ENCODE measurements at regions of chr1 and their contacts with region 1.

Region 1: DNA sequence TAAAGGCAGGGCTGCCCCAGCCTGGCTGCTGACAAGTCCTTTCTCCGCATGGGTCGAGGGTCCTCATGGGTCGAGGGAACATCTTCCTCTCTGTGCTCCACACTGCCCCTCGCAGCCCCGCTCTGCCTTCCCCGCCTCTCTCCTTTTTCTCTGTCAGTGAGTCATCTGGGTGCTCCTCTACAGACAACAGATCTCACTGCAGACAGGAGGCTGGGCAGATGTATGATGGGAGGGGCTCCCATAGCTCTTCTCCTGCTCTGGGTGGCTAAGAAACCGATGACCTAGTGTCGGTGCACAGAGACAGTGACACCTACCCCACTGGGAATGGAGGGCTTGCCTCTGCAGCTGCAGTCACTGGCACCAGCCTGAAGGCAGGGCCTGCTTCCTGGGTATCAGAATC is 5.5 kb downstream of the KCNA10 start:
- DNase-seq: no peak
- H3K4me3 ChIP-seq: no peak overlapping the region
- H3K27me3 ChIP-seq: peaks cover 1% of the 10 kb centered on the region; the same call in 1 of the 2 replicates
- CTCF ChIP-seq: no peak

Region 2: GRCh38 chr1:110338886-110339406 is 174.6 kb before region 1 on chr1 and contains the start of gene RBM15:
- CTCF ChIA-PET with region 1: no interaction called
- POLR2A ChIA-PET with region 1: no interaction called
- DNase-seq: peak; percentile 100
- H3K4me3 ChIP-seq: peak within 1 kb of the TSS; percentile 96
- H3K27me3 ChIP-seq: no peaks in the 10 kb centered on the region
- CTCF ChIP-seq: no peak
- polyA plus RNA-seq, gene RBM15: 9.7 and 10.2 TPM in 2 replicates

Region 3: DNA sequence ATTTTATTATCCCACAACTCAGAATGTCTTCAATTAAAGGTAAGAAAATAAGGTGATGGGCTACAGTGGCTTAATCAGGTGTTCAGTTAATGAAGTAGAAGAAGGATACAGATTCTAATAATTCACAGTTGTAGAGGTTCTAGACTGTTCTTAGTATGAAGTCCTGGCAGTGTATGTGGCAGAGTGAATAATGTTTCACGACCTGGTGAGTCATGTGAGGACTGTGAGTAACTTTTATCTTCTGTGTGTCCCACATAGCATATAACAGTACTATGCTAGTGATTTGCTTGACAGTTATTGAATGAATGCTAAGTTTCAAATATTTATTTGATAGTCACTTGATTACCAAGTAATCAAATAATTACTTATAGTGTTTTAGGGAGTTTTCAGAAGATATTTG is 142.7 kb before region 1 on chr1:
- CTCF ChIA-PET with region 1: no interaction called
- POLR2A ChIA-PET with region 1: no interaction called
- DNase-seq: no peak
- H3K4me3 ChIP-seq: no peak overlapping the region
- H3K27me3 ChIP-seq: no peaks in the 10 kb centered on the region
- CTCF ChIP-seq: no peak

Region 4: DNA sequence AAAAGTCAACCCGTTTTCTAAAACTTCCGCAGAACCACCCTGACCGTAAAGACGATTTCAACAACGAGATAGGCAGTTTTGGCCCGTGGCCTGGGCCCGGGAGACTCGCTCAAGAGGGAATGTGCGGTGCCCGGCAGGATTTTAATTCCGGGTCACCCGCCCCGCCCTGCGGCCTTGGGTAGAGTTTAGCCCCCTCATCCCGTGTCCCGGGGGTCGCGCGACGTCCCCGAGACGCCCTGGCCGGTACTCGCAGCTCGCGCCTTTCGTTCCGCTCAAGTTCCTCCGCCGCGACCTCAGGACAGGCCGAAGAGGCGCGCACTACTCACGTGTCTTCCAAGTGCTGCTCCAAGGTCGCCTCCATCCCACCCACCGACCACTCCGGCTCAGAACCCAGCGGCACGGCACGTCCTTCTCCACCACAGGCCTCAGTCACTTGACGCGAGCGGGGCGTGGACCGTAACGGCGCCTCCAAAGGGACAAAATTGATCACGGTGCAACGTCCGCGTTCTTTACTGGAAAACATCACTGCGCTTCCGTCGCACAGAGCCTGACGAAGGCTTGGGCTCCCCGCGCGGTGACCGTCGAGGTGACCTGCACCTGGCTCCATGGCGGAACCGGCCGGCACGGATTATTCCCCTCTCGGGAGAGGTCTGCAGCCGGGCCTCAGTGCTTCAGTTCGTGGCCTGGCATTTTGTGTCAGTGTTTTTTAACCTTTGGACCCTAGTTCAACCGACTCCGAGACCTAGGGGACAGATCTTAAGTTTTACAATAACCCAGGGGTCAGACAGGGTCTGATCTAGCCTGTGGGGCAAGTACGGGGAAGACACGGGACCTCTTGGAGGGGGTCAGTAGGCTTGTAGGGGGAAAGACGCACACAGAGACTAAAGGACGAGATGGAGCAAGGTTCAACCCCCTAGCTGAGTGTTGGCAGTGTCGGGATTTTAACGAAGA is 106.0 kb before region 1 on chr1 and contains the start of gene LAMTOR5:
- CTCF ChIA-PET with region 1: no interaction called
- POLR2A ChIA-PET with region 1: no interaction called
- DNase-seq: peak; percentile 68
- H3K4me3 ChIP-seq: peak within 1 kb of the TSS; percentile 99
- H3K27me3 ChIP-seq: no peaks in the 10 kb centered on the region
- CTCF ChIP-seq: no peak
- polyA plus RNA-seq, gene LAMTOR5: 236 and 261 TPM in 2 replicates

Region 5: GRCh38 chr1:110524311-110525251 is 11.1 kb after region 1 on chr1:
- CTCF ChIA-PET with region 1: interaction called, 14 read pairs
- POLR2A ChIA-PET with region 1: no interaction called
- DNase-seq: no peak
- H3K4me3 ChIP-seq: no peak overlapping the region
- H3K27me3 ChIP-seq: peaks cover 14% of the 10 kb centered on the region
- CTCF ChIP-seq: peak; percentile 66